Activated CD8-positive, alpha-beta T cell treated with anti-CD3 and anti-CD28 coated beads for 36 hours (primary cell): ENCODE measurements at regions of chr9 and their contacts with region 1.

Region 1: DNA sequence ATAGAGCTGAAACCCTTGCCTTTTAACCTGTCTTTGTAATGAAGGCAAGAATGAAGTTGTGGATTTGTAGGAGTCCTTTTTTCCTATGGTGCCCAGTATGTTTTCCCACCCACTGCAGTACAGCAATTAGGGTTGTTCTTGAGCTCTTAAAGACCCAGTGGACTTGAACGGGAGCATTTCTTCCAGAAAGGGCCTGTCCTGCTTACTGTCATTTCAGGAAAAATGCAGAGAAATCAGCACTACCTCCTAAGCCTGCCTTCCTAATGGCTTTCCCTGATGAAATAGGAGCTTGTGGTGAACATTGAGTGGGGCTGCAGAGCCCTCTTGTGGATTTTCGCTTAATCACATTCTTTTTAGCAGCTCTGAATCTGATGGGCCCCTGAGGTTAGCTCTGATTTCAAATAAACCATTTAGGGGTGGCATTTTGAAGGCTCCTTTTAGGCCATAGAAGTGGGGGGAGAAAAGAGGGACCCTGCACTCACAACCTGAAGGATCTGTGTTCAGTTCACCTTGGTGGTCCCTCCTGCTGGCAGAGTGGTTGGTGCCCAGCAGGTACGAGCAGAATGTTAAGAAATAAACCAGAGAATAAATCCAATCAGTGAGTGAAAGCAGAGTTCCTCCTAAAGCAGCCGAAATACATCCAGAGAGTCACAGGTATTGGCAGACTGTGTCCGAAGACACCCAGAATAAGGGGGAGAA is 188.0 kb upstream of the KLF9 start:
- DNase-seq: peak; percentile 61
- ATAC-seq: peak; percentile 81
- H3K4me3 Mint-ChIP-seq: no peak overlapping the region
- H3K27ac Mint-ChIP-seq: no peak overlapping the region
- H3K4me1 Mint-ChIP-seq: no peaks in the 10 kb centered on the region
- H3K27me3 Mint-ChIP-seq: no peaks in the 10 kb centered on the region
- CTCF ChIP-seq: peak; percentile 91

Region 2: GRCh38 chr9:69971643-69972449 is 630.6 kb before region 1 on chr9:
- CTCF ChIA-PET with region 1: interaction called, 4 read pairs
- POLR2A ChIA-PET with region 1: no interaction called
- intact Hi-C with region 1: loop called (anchors 5 kb)
- DNase-seq: peak; percentile 74
- ATAC-seq: peak; percentile 37
- H3K4me3 Mint-ChIP-seq: no peak overlapping the region
- H3K27ac Mint-ChIP-seq: no peak overlapping the region
- H3K4me1 Mint-ChIP-seq: no peaks in the 10 kb centered on the region
- H3K27me3 Mint-ChIP-seq: peaks cover 4% of the 10 kb centered on the region
- CTCF ChIP-seq: peak; percentile 68

Region 3: GRCh38 chr9:70352802-70353201 is 249.7 kb before region 1 on chr9:
- CTCF ChIA-PET with region 1: interaction called, 13 read pairs
- POLR2A ChIA-PET with region 1: interaction called, 3 read pairs
- intact Hi-C with region 1: no loop called
- DNase-seq: no peak
- ATAC-seq: no peak
- H3K4me3 Mint-ChIP-seq: no peak overlapping the region
- H3K27ac Mint-ChIP-seq: no peak overlapping the region
- H3K4me1 Mint-ChIP-seq: peaks cover 2% of the 10 kb centered on the region
- H3K27me3 Mint-ChIP-seq: no peaks in the 10 kb centered on the region
- CTCF ChIP-seq: peak; percentile 19

Region 4: DNA sequence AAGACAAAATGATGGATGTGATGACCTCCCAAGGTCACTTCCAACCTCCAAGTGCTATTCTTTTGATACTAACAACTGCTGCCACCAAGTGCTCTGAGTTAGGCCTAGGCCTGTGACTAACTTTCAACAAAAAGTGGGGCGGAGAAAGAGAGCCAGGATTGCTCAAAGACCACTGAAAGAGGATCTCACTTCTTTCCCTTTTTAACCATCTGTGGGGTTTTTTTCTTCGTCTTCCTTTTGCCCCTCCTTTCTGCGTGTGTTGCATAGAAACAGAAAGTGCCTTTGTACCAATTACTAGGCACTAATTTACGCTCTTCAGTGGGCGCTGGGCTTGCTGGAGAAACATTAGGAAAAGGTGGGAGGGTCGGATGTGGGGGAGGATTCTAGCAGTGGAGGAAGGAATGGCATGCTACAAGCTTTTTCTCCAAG is 196.0 kb before region 1 on chr9:
- CTCF ChIA-PET with region 1: interaction called, 15 read pairs
- POLR2A ChIA-PET with region 1: no interaction called
- intact Hi-C with region 1: loop called (anchors 5 kb)
- DNase-seq: peak; percentile 76
- ATAC-seq: peak; percentile 81
- H3K4me3 Mint-ChIP-seq: peak overlapping the region; percentile 74
- H3K27ac Mint-ChIP-seq: peak overlapping the region; percentile 94
- H3K4me1 Mint-ChIP-seq: peaks cover 81% of the 10 kb centered on the region
- H3K27me3 Mint-ChIP-seq: no peaks in the 10 kb centered on the region
- CTCF ChIP-seq: no peak

Region 5: GRCh38 chr9:70484210-70485130 is 118.0 kb before region 1 on chr9:
- CTCF ChIA-PET with region 1: interaction called, 10 read pairs
- POLR2A ChIA-PET with region 1: interaction called, 3 read pairs
- intact Hi-C with region 1: no loop called
- DNase-seq: no peak
- ATAC-seq: no peak
- H3K4me3 Mint-ChIP-seq: no peak overlapping the region
- H3K27ac Mint-ChIP-seq: no peak overlapping the region
- H3K4me1 Mint-ChIP-seq: peaks cover 4% of the 10 kb centered on the region
- H3K27me3 Mint-ChIP-seq: no peaks in the 10 kb centered on the region
- CTCF ChIP-seq: peak; percentile 59

Region 6: DNA sequence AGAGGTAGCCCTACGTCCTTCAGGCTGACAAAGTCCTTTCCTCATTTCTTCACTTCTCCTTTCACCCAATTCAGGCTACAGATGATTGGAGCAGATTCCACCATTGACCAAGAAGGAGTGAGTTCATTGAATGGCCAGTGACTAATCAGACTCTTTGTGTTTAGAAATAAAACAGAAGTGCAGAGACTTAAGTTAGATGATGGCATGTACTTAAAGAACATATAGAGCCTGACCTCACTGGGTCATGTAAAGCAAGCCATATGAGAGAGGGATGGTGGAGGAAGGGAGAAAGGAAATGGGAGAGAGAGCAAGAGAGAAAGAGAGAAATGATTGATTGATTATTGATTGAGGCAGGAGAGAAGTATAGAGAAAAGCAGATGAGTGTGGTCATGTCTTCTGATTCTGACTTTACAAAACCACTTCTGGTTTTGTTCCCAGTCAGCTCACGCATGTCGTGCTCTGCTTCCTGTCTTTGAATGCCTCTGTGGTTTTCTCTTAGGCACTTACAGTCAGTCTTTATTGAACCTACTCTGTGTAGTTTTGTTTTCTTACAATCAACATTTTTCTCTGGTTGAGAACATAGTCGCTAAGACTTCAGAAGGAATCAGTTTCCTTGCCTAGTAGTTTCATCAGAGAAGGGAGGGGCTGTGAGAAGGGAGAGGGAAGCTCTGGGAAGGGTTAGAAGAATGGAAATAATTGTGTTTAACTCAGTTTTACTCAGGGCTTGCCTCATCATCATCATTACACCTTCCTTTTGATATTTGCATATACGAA is 38.9 kb before region 1 on chr9:
- CTCF ChIA-PET with region 1: interaction called, 18 read pairs
- POLR2A ChIA-PET with region 1: no interaction called
- intact Hi-C with region 1: no loop called
- DNase-seq: peak; percentile 78
- ATAC-seq: peak; percentile 87
- H3K4me3 Mint-ChIP-seq: peak overlapping the region; percentile 63
- H3K27ac Mint-ChIP-seq: peak overlapping the region; percentile 96
- H3K4me1 Mint-ChIP-seq: peaks cover 46% of the 10 kb centered on the region
- H3K27me3 Mint-ChIP-seq: no peaks in the 10 kb centered on the region
- CTCF ChIP-seq: no peak